Endothelial cell of umbilical vein (primary cell): ENCODE measurements at regions of chr9 and their contacts with region 1.

Region 1: DNA sequence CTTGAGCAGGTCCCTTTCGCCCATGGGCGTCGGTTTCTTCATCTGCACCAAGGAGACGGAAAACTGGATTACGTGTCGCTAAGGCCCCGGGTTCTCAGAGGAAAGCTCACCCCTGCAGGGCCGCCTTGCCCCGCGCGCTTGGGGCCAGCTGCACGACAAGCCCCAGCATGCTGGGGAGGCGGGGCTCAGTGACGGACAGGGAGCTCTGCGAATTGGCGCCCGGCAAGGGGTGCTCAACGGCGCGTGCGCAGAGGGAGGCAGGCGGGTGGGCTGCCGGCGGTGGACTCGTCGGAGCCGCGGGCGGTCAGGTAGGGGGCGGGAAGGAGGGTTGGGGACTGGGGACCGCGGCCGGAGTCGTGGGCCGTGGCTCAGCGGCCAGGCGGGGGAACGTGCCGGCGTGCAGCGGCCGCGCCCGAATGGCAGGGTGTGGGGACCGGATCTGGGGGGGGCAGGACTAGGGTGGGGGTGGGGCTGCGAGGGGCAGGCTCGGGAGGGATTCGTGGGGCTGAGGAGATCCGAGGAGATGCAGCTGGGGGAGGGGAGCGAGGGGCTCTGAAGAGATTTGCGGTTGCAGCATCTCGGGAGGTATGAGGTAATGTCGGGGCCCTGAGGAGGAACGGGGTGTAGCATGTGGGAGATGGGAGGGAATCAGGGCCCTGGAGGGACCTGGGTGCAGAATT is at the start of gene TRIM32:
- DNase-seq: peak; percentile 92
- H3K4me3 ChIP-seq: peak within 1 kb of the TSS; percentile 65 to 82 (median 73)
- H3K27ac ChIP-seq: no peak within 1 kb of the TSS
- H3K4me1 ChIP-seq: peaks cover 11% of the 10 kb centered on the region
- H3K27me3 ChIP-seq: no peaks in the 10 kb centered on the region
- CTCF ChIP-seq: no peak
- POLR2A ChIP-seq: peak; percentile 19
- total RNA-seq, gene TRIM32: 18.2 and 18.4 TPM in 2 replicates

Region 2: GRCh38 chr9:116697362-116697761 is 10.1 kb after region 1 on chr9:
- CTCF ChIA-PET with region 1: interaction called, 14 read pairs
- POLR2A ChIA-PET with region 1: no interaction called
- dilution Hi-C with region 1: no loop called
- intact Hi-C with region 1: no loop called
- DNase-seq: no peak
- H3K4me3 ChIP-seq: no peak overlapping the region
- H3K27ac ChIP-seq: no peak overlapping the region
- H3K4me1 ChIP-seq: no peaks in the 10 kb centered on the region
- H3K27me3 ChIP-seq: no peaks in the 10 kb centered on the region
- CTCF ChIP-seq: no peak
- POLR2A ChIP-seq: no peak

Region 3: DNA sequence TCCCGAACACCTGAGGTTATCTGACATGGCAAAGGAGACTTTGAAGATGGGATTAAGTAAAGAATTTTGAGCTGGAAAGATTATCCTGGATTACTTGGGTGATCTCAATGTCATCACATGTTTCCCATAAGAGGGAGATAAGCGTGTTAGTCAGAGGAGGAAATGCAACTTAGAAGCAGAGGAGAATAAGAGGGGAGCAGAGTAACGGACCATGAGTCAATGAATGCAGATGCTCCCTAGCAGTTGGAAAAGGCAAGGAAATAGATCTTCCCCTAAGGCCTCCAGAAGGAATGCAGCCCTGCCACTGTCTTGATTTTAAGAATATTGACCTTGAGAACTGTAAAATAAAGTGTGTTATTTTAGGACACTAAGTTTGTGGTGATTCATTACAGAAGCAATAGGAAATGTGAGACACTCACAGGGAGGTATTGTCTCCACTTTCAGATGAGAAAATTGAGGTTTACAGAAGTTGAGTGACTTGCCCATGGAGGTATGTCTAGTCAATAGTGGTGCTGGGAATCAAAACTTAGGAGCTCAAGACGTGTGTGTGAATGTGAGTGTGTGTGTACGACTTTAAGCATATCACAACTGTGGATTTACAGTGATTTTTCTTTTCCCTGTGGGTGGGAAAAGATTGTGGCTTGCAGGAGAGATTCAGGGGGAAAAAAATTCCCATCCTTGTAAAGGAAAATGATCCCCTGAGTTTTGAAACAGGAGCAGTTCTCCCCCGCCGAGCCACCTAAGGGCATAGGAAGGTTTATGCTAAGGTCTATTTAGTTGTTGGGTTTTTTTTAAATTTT is 125.2 kb after region 1 on chr9:
- CTCF ChIA-PET with region 1: no interaction called
- POLR2A ChIA-PET with region 1: no interaction called
- dilution Hi-C with region 1: no loop called
- intact Hi-C with region 1: no loop called
- DNase-seq: no peak
- H3K4me3 ChIP-seq: no peak overlapping the region
- H3K27ac ChIP-seq: no peak overlapping the region
- H3K4me1 ChIP-seq: no peaks in the 10 kb centered on the region
- H3K27me3 ChIP-seq: no peaks in the 10 kb centered on the region
- CTCF ChIP-seq: no peak
- POLR2A ChIP-seq: no peak